ENCODE measurements at regions of chr9 and their contacts with region 1.

Region 1: GRCh38 chr9:272251-273213 is 57.9 kb downstream of the DOCK8 start:
- DNase-seq: peak; percentile 82 to 91 (median 89)
- H3K4me3 ChIP-seq: peak overlapping the region; percentile 48 to 75
- H3K4me3 Mint-ChIP-seq: peak overlapping the region; percentile 88 to 97 (median 94)
- H3K27ac ChIP-seq: peak overlapping the region; percentile 89
- H3K27ac Mint-ChIP-seq: peak overlapping the region in 6 of 7 donors; percentile 94 to 99 (median 98)
- H3K4me1 ChIP-seq: peaks cover 71% of the 10 kb centered on the region
- H3K4me1 Mint-ChIP-seq: peaks cover 40 to 71% (median 43%) of the 10 kb centered on the region in 4 donors
- H3K27me3 ChIP-seq: no peaks in the 10 kb centered on the region
- H3K27me3 Mint-ChIP-seq: no peaks in the 10 kb centered on the region

Region 2: GRCh38 chr9:214648-215493 is 57.7 kb before region 1 on chr9 and contains the start of gene DOCK8:
- CTCF ChIA-PET with region 1: interaction called, 32 read pairs
- POLR2A ChIA-PET with region 1: interaction called, 192 read pairs
- intact Hi-C with region 1: loop called (anchors 1 kb)
- DNase-seq: peak; percentile 42 to 68 (median 55)
- H3K4me3 ChIP-seq: peak within 1 kb of the TSS; percentile 27 to 68
- H3K4me3 Mint-ChIP-seq: peak within 1 kb of the TSS; percentile 89 to 94 (median 92)
- H3K27ac ChIP-seq: peak within 1 kb of the TSS; percentile 48
- H3K27ac Mint-ChIP-seq: peak within 1 kb of the TSS; percentile 42 to 92 (median 84)
- H3K4me1 ChIP-seq: peaks cover 19% of the 10 kb centered on the region
- H3K4me1 Mint-ChIP-seq: peaks cover 11 to 29% (median 18%) of the 10 kb centered on the region in 4 donors
- H3K27me3 ChIP-seq: no peaks in the 10 kb centered on the region
- H3K27me3 Mint-ChIP-seq: no peaks in the 10 kb centered on the region
- total RNA-seq, gene DOCK8: 307 to 315 TPM

Region 3: DNA sequence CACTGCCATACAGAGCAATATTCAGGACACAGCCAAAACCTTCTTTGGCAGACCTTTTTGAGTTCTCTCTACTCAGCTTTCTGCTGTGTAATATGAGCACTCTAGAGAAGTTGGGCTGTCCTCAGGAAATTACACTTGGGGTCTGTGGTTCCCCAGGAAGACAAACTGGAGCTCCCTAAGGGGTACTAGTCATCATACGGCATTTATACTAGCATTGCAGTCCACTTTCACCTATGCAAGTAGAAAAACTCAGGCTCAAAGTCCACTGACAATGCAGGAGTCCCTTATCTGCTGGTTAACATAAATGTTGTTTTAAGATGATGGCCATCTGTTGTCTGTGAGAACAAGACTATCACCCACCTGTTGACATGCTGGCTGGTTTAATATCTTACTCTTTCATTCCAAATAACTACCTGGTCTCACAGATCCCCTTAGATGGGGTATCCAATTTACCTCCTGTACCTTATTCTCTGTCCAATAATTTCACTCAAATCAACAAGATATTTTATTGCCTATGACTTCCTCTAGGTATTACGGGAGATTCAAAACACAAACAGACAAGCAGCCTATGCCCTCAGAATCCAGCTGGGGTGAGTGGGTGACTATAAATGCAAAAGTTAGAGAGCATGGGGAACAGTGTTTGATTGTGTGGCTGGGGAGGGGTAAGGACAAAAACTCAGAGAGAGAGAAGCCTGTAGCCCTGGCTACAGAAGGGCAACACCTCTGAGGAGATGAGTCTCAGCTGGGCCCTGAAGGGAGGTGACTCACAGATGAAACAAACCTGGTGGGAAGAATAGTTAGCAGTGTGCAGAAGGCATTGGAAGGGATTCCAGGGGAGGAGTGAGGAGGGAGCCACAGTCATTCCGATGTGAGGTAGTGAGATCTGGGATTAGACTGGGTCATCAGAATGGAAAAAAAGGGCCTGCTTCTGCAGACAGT is 47.7 kb before region 1 on chr9:
- CTCF ChIA-PET with region 1: interaction called, 3 read pairs
- POLR2A ChIA-PET with region 1: interaction called, 17 read pairs
- intact Hi-C with region 1: no loop called
- DNase-seq: no peak
- H3K4me3 ChIP-seq: no peak overlapping the region
- H3K4me3 Mint-ChIP-seq: peak overlapping the region in 3 of 8 donors; percentile 18 to 37 (median 31)
- H3K27ac ChIP-seq: no peak overlapping the region
- H3K27ac Mint-ChIP-seq: peak overlapping the region in 2 of 7 donors; percentile 4 to 20
- H3K4me1 ChIP-seq: peaks cover 33% of the 10 kb centered on the region
- H3K4me1 Mint-ChIP-seq: peaks cover 16 to 33% (median 23%) of the 10 kb centered on the region in 4 donors
- H3K27me3 ChIP-seq: no peaks in the 10 kb centered on the region
- H3K27me3 Mint-ChIP-seq: no peaks in the 10 kb centered on the region

Region 4: DNA sequence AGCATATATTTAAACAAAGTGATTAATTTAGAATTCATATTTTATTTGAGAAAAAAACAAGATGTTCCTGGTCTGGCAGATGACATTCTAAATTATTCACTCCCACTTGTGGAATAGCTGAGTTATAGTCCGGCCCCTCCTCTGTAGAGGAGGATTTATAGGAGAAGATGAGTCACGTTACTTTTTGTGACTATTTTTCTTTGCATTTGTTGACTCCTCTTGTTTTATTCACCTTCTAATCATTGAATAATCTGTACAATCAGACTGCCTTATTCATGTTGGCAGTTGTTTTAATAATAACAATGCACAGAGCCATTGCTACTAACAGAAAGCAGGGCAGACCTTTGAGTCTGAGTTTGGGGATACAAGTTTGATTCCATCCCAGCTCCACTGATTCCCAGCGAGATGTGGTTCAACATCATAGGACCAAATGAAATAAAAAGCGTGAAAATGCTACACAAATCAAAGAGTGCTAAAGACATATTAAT is 34.6 kb before region 1 on chr9:
- CTCF ChIA-PET with region 1: interaction called, 3 read pairs
- POLR2A ChIA-PET with region 1: interaction called, 10 read pairs
- intact Hi-C with region 1: no loop called
- DNase-seq: no peak
- H3K4me3 ChIP-seq: peak overlapping the region in 1 of 2 donors; percentile 22
- H3K4me3 Mint-ChIP-seq: peak overlapping the region in 5 of 8 donors; percentile 26 to 59 (median 51)
- H3K27ac ChIP-seq: no peak overlapping the region
- H3K27ac Mint-ChIP-seq: peak overlapping the region in 4 of 7 donors; percentile 20 to 73 (median 52)
- H3K4me1 ChIP-seq: peaks cover 29% of the 10 kb centered on the region
- H3K4me1 Mint-ChIP-seq: peaks cover 16 to 48% (median 28%) of the 10 kb centered on the region in 4 donors
- H3K27me3 ChIP-seq: no peaks in the 10 kb centered on the region
- H3K27me3 Mint-ChIP-seq: no peaks in the 10 kb centered on the region

Region 5: GRCh38 chr9:257957-258356 is 14.6 kb before region 1 on chr9:
- CTCF ChIA-PET with region 1: interaction called, 3 read pairs
- POLR2A ChIA-PET with region 1: interaction called, 11 read pairs
- intact Hi-C with region 1: no loop called
- DNase-seq: no peak
- H3K4me3 ChIP-seq: no peak overlapping the region
- H3K4me3 Mint-ChIP-seq: no peak overlapping the region
- H3K27ac ChIP-seq: no peak overlapping the region
- H3K27ac Mint-ChIP-seq: peak overlapping the region in 1 of 7 donors; percentile 44
- H3K4me1 ChIP-seq: no peaks in the 10 kb centered on the region
- H3K4me1 Mint-ChIP-seq: no peaks in the 10 kb centered on the region
- H3K27me3 ChIP-seq: no peaks in the 10 kb centered on the region
- H3K27me3 Mint-ChIP-seq: no peaks in the 10 kb centered on the region

Region 6: GRCh38 chr9:306887-307286 is 34.4 kb after region 1 on chr9:
- CTCF ChIA-PET with region 1: interaction called, 3 read pairs
- POLR2A ChIA-PET with region 1: interaction called, 10 read pairs
- intact Hi-C with region 1: loop called (anchors 5 kb)
- DNase-seq: peak; percentile 50 to 70 (median 60)
- H3K4me3 ChIP-seq: no peak overlapping the region
- H3K4me3 Mint-ChIP-seq: no peak overlapping the region
- H3K27ac ChIP-seq: no peak overlapping the region
- H3K27ac Mint-ChIP-seq: peak overlapping the region; percentile 24 to 83 (median 78)
- H3K4me1 ChIP-seq: peaks cover 4% of the 10 kb centered on the region
- H3K4me1 Mint-ChIP-seq: peaks cover 18 to 34% (median 20%) of the 10 kb centered on the region in 4 donors
- H3K27me3 ChIP-seq: no peaks in the 10 kb centered on the region
- H3K27me3 Mint-ChIP-seq: no peaks in the 10 kb centered on the region

Region 7: DNA sequence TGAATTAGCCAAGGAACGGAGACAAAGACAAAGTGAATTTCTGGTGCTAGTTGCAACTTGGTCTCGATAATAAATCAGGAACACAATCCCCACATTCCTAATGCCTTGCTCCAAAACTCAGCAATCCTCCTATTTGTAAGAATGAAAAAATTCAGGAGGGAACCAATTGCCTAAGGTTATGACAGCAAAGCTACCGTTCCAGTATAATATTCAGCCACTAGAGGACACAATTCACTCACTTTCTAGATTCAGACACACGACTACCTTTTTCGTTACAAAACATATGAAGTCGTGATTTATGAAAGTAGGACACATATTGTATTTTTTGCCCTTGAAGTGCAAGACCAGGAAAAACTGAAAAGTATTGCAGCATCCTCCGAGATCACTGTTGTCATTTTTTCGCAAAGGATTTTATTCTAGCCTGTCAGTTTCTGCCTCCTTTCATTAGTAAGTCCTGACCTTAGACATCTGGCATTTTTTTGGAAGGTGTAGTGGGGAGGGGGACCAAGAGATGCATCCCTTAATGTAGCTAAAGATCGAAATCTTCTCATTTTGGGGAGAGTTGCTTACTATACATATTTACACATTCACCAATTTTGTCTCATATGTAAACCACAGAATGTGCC is 75.2 kb after region 1 on chr9:
- CTCF ChIA-PET with region 1: no interaction called
- POLR2A ChIA-PET with region 1: no interaction called
- intact Hi-C with region 1: no loop called
- DNase-seq: no peak
- H3K4me3 ChIP-seq: no peak overlapping the region
- H3K4me3 Mint-ChIP-seq: no peak overlapping the region
- H3K27ac ChIP-seq: no peak overlapping the region
- H3K27ac Mint-ChIP-seq: peak overlapping the region in 5 of 7 donors; percentile 12 to 63 (median 28)
- H3K4me1 ChIP-seq: peaks cover 23% of the 10 kb centered on the region
- H3K4me1 Mint-ChIP-seq: peaks cover 24 to 48% (median 41%) of the 10 kb centered on the region in 4 donors
- H3K27me3 ChIP-seq: no peaks in the 10 kb centered on the region
- H3K27me3 Mint-ChIP-seq: no peaks in the 10 kb centered on the region